Mammary epithelial cell (primary cell): ENCODE measurements at regions of chr11 and their contacts with region 1.

Region 1: DNA sequence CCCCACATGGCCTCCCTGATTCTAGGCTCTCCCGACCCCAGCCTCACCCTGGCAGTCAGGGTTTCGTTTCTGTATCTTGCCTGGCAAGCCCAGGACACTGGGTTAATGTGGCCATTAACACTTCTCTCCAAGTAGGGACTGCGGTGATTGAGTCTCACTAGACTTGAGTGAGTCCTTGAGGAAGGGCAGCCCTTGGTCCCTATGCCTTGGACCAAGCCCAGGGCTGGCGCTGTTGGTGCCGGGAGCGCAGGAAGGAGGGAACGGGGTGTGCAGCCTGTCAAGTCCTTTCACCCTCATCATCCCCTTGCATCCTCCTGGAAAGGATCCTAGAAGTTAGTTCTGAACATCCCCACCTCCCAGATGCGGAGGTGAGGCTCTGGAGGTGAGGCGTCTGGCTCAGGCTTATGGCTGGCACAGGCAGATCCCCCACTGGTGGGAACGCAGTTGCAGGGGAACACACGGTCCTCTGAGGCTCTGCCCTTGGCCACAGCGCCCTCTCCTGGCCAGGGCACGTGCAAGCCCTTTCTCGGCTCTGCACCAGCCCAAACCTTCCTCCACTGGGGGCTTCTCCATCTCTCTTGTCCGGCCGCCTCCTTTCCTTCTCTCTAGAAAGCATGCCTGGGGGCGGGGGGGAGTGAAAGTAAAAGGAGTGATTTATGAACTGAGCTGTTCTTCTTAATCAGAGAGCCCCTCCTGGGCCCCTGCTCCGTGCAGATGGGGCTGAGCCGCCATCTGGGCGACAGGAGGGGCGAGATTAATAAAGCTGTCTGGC is 56.7 kb downstream of the TP53I11 start:
- DNase-seq: peak; percentile 16
- H3K4me3 ChIP-seq: no peak overlapping the region
- H3K27ac ChIP-seq: no peak overlapping the region
- H3K4me1 ChIP-seq: no peaks in the 10 kb centered on the region
- H3K27me3 ChIP-seq: peaks cover 2% of the 10 kb centered on the region
- CTCF ChIP-seq: peak; percentile 75 to 92

Region 2: DNA sequence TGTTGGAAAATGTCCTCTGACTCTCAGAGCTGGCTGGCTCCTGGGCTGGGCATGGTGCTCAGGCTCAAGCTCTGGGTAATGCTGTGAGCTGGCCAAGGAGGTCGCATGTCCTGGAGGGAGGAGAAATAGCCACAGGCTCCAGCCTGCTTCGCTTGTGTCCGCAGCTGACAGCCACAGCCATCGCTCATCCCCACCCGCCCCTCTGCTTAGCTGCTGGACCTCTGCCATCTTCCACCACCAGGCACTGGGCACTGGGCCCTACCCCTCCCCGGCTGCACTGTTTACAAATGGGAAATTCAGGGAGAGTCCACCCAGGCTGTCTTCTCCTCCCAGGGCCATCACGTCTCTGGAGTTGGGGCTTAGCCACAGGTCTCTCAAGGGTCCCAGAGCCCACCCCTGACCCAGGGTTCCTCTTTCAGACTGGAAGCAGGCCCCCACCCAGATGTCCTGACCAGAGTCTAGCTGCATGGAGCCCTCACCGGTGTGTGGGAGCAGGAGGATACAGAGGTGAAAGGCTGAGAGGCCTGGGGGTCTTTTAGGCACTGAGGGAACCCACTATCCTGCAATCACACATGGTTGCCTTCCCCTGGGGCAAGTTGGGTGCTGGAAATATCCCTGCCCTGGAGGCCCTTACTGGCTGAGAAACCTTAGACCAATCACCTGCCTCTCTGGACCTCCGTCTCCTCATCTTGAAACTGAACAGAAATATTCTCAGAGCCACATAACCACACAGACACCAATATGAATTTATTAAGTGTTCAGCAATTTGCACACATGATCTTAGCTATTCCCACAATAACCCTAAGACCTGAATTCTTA is 265.9 kb before region 1 on chr11:
- CTCF ChIA-PET with region 1: no interaction called
- dilution Hi-C with region 1: loop called (anchors 25 kb)
- in situ Hi-C with region 1: loop called in 1 of 2 experiments (anchors 10 kb)
- intact Hi-C with region 1: no loop called
- DNase-seq: no peak
- H3K4me3 ChIP-seq: no peak overlapping the region
- H3K27ac ChIP-seq: no peak overlapping the region
- H3K4me1 ChIP-seq: no peaks in the 10 kb centered on the region
- H3K27me3 ChIP-seq: no peaks in the 10 kb centered on the region
- CTCF ChIP-seq: no peak

Region 3: GRCh38 chr11:44775366-44775984 is 118.6 kb before region 1 on chr11:
- CTCF ChIA-PET with region 1: interaction called, 4 read pairs
- dilution Hi-C with region 1: no loop called
- in situ Hi-C with region 1: no loop called
- intact Hi-C with region 1: loop called (anchors 2 kb)
- DNase-seq: peak; percentile 32
- H3K4me3 ChIP-seq: no peak overlapping the region
- H3K27ac ChIP-seq: no peak overlapping the region
- H3K4me1 ChIP-seq: no peaks in the 10 kb centered on the region
- H3K27me3 ChIP-seq: peaks cover 4% of the 10 kb centered on the region
- CTCF ChIP-seq: peak; percentile 82 to 85

Region 4: DNA sequence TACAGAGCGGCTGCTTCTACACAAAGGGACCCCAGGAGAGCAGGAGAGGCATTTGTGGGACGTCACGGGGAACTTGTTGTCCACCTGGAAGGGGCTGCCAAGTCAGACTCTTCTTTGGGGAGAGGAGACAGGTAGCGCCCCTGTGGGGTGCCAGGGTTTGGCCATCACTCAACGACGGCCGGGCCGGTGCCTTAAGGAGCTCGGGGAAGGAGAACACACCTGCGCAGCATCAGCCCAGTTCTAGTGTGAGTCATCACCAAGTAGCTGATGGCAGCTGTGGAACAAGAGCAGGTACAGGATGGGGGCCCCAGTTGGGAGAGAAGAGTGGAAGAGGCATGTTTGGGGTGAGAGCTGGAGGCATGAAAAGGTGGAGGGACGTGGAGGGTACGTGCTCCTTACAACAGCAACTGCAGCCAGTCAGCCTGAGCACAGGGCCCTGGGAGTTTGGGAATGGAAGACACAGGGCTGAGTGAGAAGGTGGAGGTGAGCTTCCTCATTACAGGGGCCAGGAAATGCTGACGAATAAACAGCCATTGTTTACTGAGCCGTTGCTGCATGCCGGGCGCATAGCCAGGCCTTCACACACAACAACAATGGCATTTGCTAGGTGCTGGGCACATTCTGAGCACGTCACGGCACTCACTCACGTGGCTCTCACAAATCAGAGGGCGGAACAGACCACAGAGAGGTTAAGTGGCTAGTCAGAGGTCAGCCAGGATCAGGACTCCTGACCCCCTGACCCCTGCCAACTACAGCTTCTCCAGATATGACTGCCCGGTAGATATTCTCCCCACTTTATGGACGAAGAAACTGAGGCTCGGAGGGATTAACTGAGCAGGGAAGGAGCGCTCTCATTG is 85.7 kb after region 1 on chr11:
- CTCF ChIA-PET with region 1: no interaction called
- dilution Hi-C with region 1: no loop called
- in situ Hi-C with region 1: no loop called
- intact Hi-C with region 1: no loop called
- DNase-seq: no peak
- H3K4me3 ChIP-seq: no peak overlapping the region
- H3K27ac ChIP-seq: no peak overlapping the region
- H3K4me1 ChIP-seq: peaks cover 15% of the 10 kb centered on the region
- H3K27me3 ChIP-seq: no peaks in the 10 kb centered on the region
- CTCF ChIP-seq: no peak